ENCODE measurements at regions of chr4 and their contacts with region 1.

Region 1: GRCh38 chr4:81913427-81913879 is 441.7 kb upstream of the RASGEF1B start:
- DNase-seq: peak; percentile 54 to 81
- H3K4me3 ChIP-seq: peak overlapping the region in 1 of 4 experiments; percentile 38; a peak in 2 of 8 replicates
- H3K27ac ChIP-seq: no peak overlapping the region
- H3K4me1 ChIP-seq: no peaks in the 10 kb centered on the region; a peak in 1 of 7 replicates
- H3K27me3 ChIP-seq: peaks cover 0 to 1% (median 0%) of the 10 kb centered on the region in 4 experiments; a peak in 1 of 7 replicates
- CTCF ChIP-seq: peak; percentile 91 to 94 (median 93)
- EP300 ChIP-seq: no peak
- POLR2A ChIP-seq: no peak
- RAD21 ChIP-seq: peak; percentile 69 to 70

Region 2: GRCh38 chr4:81874661-81875515 is 38.6 kb before region 1 on chr4:
- CTCF ChIA-PET with region 1: interaction called, 10 read pairs
- POLR2A ChIA-PET with region 1: no interaction called
- DNase-seq: no peak
- H3K4me3 ChIP-seq: no peak overlapping the region
- H3K27ac ChIP-seq: peak overlapping the region; percentile 9; the same call in 1 of the 2 replicates
- H3K4me1 ChIP-seq: peaks cover 3 to 10% (median 4%) of the 10 kb centered on the region in 4 experiments; a peak in 5 of 7 replicates
- H3K27me3 ChIP-seq: no peaks in the 10 kb centered on the region
- CTCF ChIP-seq: no peak
- EP300 ChIP-seq: no peak
- POLR2A ChIP-seq: no peak
- RAD21 ChIP-seq: no peak

Region 3: DNA sequence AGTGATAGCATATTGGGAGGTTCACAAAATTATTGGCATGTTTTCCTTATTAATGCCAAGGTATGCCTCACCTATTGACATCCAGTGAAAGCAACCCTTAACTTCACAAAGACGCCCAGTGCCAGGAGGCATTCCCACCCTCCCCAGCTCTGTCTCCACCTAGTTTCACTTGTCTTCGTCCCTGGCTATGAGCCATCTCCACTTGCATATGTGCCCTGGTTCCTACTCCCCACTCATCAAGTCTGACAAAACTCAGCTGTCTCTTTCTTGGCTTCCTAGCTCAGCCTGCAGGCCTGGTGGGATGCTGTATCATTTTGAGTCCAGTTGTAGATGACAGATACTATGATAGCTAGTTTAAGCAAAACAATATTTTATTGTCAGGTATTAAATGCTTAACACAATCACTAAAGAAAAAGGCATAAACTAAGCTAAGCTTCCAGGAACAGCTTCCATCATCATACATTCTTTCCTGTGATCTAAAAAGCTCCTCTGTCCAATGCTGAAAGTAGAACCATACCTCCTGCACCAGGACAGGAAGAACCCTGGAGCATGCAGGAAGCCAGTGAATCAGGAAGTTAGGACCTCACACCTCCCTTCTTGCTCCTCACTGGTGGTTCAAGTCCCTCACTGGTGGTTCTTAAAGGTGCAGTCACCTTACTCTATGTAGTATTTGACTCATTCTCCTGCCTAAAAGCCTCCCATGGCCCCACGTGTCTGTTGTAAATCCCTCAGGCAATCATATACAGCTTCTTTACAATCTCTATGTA is 31.4 kb before region 1 on chr4:
- CTCF ChIA-PET with region 1: interaction called, 19 read pairs
- POLR2A ChIA-PET with region 1: no interaction called
- DNase-seq: no peak
- H3K4me3 ChIP-seq: no peak overlapping the region
- H3K27ac ChIP-seq: no peak overlapping the region
- H3K4me1 ChIP-seq: no peaks in the 10 kb centered on the region
- H3K27me3 ChIP-seq: no peaks in the 10 kb centered on the region
- CTCF ChIP-seq: no peak
- EP300 ChIP-seq: no peak
- POLR2A ChIP-seq: no peak
- RAD21 ChIP-seq: no peak

Region 4: GRCh38 chr4:81896936-81897335 is 16.5 kb before region 1 on chr4:
- CTCF ChIA-PET with region 1: interaction called, 34 read pairs
- POLR2A ChIA-PET with region 1: no interaction called
- DNase-seq: no peak
- H3K4me3 ChIP-seq: no peak overlapping the region
- H3K27ac ChIP-seq: no peak overlapping the region
- H3K4me1 ChIP-seq: peaks cover 0 to 7% (median 0%) of the 10 kb centered on the region in 4 experiments; a peak in 1 of 7 replicates
- H3K27me3 ChIP-seq: no peaks in the 10 kb centered on the region
- CTCF ChIP-seq: no peak
- EP300 ChIP-seq: no peak
- POLR2A ChIP-seq: no peak
- RAD21 ChIP-seq: no peak

Region 5: GRCh38 chr4:82192017-82192673 is 278.7 kb after region 1 on chr4:
- CTCF ChIA-PET with region 1: interaction called, 11 read pairs
- POLR2A ChIA-PET with region 1: no interaction called
- DNase-seq: no peak
- H3K4me3 ChIP-seq: no peak overlapping the region
- H3K27ac ChIP-seq: no peak overlapping the region
- H3K4me1 ChIP-seq: no peaks in the 10 kb centered on the region
- H3K27me3 ChIP-seq: no peaks in the 10 kb centered on the region
- CTCF ChIP-seq: no peak
- EP300 ChIP-seq: no peak
- POLR2A ChIP-seq: no peak
- RAD21 ChIP-seq: no peak

Region 6: DNA sequence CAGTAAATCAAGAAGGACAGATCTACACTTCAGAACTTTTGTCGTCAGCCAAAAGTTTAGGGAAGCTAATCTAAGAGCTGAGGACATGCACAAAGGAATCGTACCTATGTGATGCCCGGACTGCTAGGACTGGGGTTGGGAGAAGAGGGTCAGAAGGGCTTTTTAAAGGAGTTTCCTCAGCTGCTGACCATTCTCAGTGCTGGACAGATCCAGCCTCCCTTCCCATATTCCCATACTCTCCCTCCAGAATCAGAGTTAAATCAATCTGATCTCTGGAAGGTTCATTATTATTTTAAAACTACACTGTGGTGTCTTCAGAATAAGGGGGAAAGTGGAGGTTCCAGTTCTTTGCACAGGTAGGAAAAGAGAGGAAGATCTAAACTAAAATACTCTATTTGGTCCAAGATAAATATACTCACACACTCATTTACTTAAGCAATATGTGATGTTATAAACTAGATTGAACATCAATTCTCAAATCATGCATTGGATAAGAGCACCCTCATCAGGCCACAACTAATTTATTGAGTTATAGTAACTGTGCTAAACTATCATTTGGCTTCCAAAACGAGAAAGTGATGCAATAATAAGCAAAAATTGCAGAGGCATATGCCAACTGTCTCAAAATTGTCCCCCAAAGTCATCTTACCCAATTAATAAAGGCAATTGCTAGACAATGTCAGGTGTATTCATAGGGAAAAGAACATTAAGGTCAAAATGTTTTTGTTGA is 335.6 kb after region 1 on chr4:
- CTCF ChIA-PET with region 1: no interaction called
- POLR2A ChIA-PET with region 1: no interaction called
- DNase-seq: no peak
- H3K4me3 ChIP-seq: no peak overlapping the region
- H3K27ac ChIP-seq: no peak overlapping the region
- H3K4me1 ChIP-seq: no peaks in the 10 kb centered on the region
- H3K27me3 ChIP-seq: no peaks in the 10 kb centered on the region
- CTCF ChIP-seq: no peak
- EP300 ChIP-seq: no peak
- POLR2A ChIP-seq: no peak
- RAD21 ChIP-seq: no peak

Measured in H1 (cell line).